K562 (cell line): ENCODE measurements at regions of chr5 and their contacts with region 1.

Region 1: DNA sequence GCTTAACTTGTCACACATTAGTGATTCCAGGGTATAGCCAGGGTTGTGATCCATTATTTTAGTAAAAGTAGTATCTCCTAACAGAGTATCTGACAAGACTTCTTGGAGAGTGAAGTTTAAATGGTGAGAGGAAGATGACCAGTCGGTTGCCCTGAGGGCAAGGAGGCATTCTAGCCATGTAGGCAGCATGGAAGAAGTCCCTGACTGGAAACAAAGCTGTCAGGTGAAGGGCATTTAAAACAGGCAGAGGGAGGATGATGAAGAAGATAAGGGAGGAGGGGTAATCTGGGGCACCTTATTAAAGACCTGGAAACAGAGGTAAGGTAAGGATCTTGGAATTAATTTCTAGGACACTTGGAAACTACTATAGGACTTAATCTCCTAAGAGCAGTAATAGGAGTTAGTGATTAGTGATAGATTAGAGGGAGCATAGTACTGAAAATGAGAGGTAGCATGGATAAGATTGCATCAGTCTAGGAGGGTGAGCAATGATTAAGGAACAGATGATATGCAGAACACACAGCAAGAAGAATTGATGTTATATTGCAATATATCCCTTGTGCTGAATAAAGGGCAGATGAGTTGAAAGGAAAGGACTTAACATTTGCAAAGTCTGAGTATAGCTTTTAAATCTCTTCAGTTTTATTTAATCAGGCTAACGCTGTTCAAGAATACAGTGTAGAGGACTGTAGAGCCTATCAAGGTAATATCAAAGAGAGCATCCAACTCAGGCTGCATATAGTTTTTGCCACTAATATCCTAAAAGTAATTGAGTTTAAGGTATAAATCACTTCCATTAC is 9.6 kb downstream of the KIF2A start:
- DNase-seq: no peak
- ATAC-seq: no peak; the same call in 2 of the 3 replicates
- H3K4me3 ChIP-seq: no peak overlapping the region
- H3K27ac ChIP-seq: no peak overlapping the region
- H3K4me1 ChIP-seq: peaks cover 4 to 40% of the 10 kb centered on the region in 2 experiments; a peak in 3 of 5 replicates
- H3K27me3 ChIP-seq: no peaks in the 10 kb centered on the region
- CTCF ChIP-seq: no peak
- EP300 ChIP-seq: no peak
- POLR2A ChIP-seq: no peak
- RAD21 ChIP-seq: no peak

Region 2: GRCh38 chr5:62326302-62326701 is 10.7 kb after region 1 on chr5:
- CTCF ChIA-PET with region 1: no interaction called
- POLR2A ChIA-PET with region 1: interaction called, 13 read pairs
- in situ Hi-C with region 1: no loop called
- intact Hi-C with region 1: no loop called
- DNase-seq: no peak
- ATAC-seq: peak; percentile 54
- H3K4me3 ChIP-seq: no peak overlapping the region
- H3K27ac ChIP-seq: no peak overlapping the region
- H3K4me1 ChIP-seq: peaks cover 4 to 22% of the 10 kb centered on the region in 2 experiments; a peak in 3 of 5 replicates
- H3K27me3 ChIP-seq: no peaks in the 10 kb centered on the region
- CTCF ChIP-seq: no peak
- EP300 ChIP-seq: no peak
- POLR2A ChIP-seq: no peak
- RAD21 ChIP-seq: no peak

Region 3: DNA sequence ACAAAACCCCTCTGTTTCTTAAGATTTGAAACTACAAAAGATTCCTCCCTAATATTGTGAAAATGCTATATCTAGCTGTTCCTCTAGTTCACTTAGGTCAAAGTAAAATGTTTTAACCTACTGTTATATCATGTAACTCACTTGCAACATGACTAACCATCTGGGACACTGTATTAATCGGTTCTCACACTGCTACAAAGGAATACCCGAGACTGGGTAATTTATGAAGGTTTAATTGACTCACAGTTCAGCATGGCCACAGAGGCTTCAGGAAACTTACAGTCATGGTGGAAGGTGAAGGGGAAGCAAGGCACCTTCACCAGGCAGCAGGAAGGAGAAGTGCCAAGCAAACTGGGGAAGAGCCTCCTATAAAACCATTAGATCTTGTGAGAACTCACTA is 53.5 kb after region 1 on chr5:
- CTCF ChIA-PET with region 1: no interaction called
- POLR2A ChIA-PET with region 1: no interaction called
- in situ Hi-C with region 1: no loop called
- intact Hi-C with region 1: no loop called
- DNase-seq: no peak
- ATAC-seq: no peak
- H3K4me3 ChIP-seq: no peak overlapping the region
- H3K27ac ChIP-seq: no peak overlapping the region
- H3K4me1 ChIP-seq: no peaks in the 10 kb centered on the region
- H3K27me3 ChIP-seq: no peaks in the 10 kb centered on the region
- CTCF ChIP-seq: no peak
- EP300 ChIP-seq: no peak
- POLR2A ChIP-seq: no peak
- RAD21 ChIP-seq: no peak